Activated CD4-positive, alpha-beta memory T cell treated with anti-CD3 and anti-CD28 coated beads, Interleukin-2, amount 10 ng/mL, durations not matched to agents 7 days and 5 days (primary cell): ENCODE measurements at regions of chr12 and their contacts with region 1.

Region 1: GRCh38 chr12:54419088-54419892 is at the start of gene ITGA5:
- DNase-seq: peak; percentile 47
- H3K4me3 Mint-ChIP-seq: peak within 1 kb of the TSS; percentile 93
- H3K27ac Mint-ChIP-seq: peak within 1 kb of the TSS; percentile 85
- H3K4me1 Mint-ChIP-seq: peaks cover 58% of the 10 kb centered on the region
- H3K27me3 Mint-ChIP-seq: peaks cover 30% of the 10 kb centered on the region
- total RNA-seq, gene ITGA5: 102 to 107 TPM

Region 2: GRCh38 chr12:54352022-54352531 is 67.2 kb before region 1 on chr12:
- CTCF ChIA-PET with region 1: no interaction called
- POLR2A ChIA-PET with region 1: no interaction called
- DNase-seq: no peak
- H3K4me3 Mint-ChIP-seq: no peak overlapping the region
- H3K27ac Mint-ChIP-seq: no peak overlapping the region
- H3K4me1 Mint-ChIP-seq: peaks cover 13% of the 10 kb centered on the region
- H3K27me3 Mint-ChIP-seq: no peaks in the 10 kb centered on the region

Region 3: DNA sequence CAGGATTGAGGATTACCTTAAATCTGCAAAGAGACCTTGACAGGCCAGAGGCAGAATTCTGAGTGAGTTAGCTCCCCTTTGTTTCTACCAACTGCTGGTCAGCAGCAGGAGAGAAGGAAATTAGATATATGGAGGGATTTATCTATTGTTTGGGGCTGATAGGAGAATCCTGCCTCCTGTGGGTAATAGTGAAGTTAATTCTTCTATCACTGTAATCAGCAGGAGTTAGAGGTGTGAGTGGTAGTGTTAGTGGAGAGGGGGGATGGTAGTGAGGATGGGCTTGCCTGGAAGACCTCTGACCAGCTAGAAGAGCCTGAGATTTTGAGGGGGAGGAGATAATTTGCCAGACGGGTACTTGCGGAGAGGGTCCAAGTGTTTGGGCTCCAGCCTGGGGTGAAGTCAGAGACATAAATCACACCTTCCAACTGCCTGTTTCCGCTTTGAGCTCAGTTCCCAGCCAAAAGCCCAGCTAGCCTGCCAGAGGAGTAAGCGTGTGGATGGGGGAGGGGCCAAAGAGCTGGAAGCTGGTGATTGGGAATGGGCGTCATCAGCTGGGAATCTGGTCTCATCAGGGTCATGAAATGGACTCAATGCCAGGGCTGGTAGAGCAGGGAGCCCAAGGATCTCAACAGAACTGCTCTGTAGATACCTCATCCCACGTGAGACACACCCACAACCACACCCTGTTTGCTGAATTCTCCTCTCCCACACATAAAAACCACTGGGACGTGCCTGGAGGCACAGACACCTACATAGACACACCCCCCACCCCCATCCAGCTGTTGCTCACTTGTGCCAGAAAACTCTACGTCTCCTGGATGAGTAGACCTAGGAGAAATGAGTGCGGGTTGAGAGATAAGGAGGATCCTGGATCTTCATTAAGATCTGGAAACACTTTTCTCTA is 12.9 kb after region 1 on chr12:
- CTCF ChIA-PET with region 1: interaction called, 46 read pairs
- POLR2A ChIA-PET with region 1: interaction called, 32 read pairs
- DNase-seq: peak; percentile 52
- H3K4me3 Mint-ChIP-seq: peak overlapping the region; percentile 63
- H3K27ac Mint-ChIP-seq: peak overlapping the region; percentile 76
- H3K4me1 Mint-ChIP-seq: peaks cover 46% of the 10 kb centered on the region
- H3K27me3 Mint-ChIP-seq: peaks cover 25% of the 10 kb centered on the region

Region 4: GRCh38 chr12:54439521-54440255 is 20.4 kb after region 1 on chr12:
- CTCF ChIA-PET with region 1: interaction called, 46 read pairs
- POLR2A ChIA-PET with region 1: interaction called, 27 read pairs
- DNase-seq: no peak
- H3K4me3 Mint-ChIP-seq: no peak overlapping the region
- H3K27ac Mint-ChIP-seq: no peak overlapping the region
- H3K4me1 Mint-ChIP-seq: peaks cover 5% of the 10 kb centered on the region
- H3K27me3 Mint-ChIP-seq: peaks cover 24% of the 10 kb centered on the region

Region 5: DNA sequence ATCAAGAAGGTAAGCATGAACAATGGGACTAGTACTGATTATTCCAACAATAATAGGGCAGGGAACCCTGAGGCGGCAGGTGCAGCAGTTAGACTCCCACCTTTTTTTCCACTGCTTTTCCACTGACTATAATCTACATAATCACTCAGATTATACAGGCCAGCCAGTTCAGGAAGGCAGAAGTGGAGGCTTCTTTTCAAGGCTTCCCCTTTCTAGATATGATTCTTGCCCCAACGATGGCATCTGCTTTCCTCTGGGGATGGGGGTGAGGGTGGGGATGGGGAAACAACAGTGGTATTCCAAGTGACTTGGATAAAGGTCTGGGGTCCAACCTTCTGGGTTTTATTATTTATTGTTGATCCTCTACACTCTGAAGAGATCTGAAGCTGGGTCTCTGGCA is 78.6 kb after region 1 on chr12:
- CTCF ChIA-PET with region 1: interaction called, 3 read pairs
- POLR2A ChIA-PET with region 1: interaction called, 10 read pairs
- DNase-seq: no peak
- H3K4me3 Mint-ChIP-seq: peak overlapping the region; percentile 99
- H3K27ac Mint-ChIP-seq: peak overlapping the region; percentile 95
- H3K4me1 Mint-ChIP-seq: peaks cover 45% of the 10 kb centered on the region
- H3K27me3 Mint-ChIP-seq: no peaks in the 10 kb centered on the region